Sigmoid colon (tissue), 7 donors: ENCODE measurements at regions of chr3 and their contacts with region 1.

Region 1: DNA sequence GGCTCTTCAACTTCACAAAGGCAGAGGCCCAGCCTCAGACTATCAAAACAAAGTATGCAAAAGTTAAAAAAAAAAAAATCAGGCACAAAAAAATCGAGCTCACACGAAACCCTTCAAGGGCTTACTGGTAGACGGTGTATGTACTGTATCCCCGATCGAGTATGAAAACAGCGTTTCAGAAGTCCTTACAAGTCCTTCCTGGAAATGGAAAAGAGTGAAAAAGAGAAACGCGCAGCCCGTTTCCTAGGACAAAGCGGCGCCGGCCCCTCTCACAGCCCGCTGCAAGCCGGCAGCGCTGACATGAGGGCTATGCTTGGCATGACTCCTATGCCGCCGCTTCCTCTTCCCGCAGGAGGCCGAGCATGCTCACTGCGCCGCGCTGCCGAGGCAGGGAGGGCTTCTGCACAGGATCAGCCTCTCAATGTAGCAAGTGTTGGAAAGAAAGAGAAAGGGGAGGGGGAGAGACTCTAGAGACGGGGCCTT is at the start of gene VGLL4:
- DNase-seq: peak; percentile 95
- H3K4me3 ChIP-seq: peak within 1 kb of the TSS; percentile 55 to 78 (median 64)
- H3K27ac ChIP-seq: peak within 1 kb of the TSS; percentile 87 to 97 (median 92)
- H3K4me1 ChIP-seq: peaks cover 0 to 37% (median 30%) of the 10 kb centered on the region in 4 donors
- H3K27me3 ChIP-seq: no peaks in the 10 kb centered on the region
- CTCF ChIP-seq: no peak
- EP300 ChIP-seq: no peak
- POLR2A ChIP-seq: peak; percentile 47 to 48
- total RNA-seq, gene VGLL4: 26.4 to 56.5 (median 50.5) TPM

Region 2: GRCh38 chr3:11385891-11386290 is 257.8 kb before region 1 on chr3:
- intact Hi-C with region 1: loop called (anchors 2 kb)
- DNase-seq: no peak
- H3K4me3 ChIP-seq: no peak overlapping the region
- H3K27ac ChIP-seq: peak overlapping the region in 2 of 4 donors; percentile 68 to 72
- H3K4me1 ChIP-seq: peaks cover 0 to 41% (median 26%) of the 10 kb centered on the region in 4 donors
- H3K27me3 ChIP-seq: no peaks in the 10 kb centered on the region
- CTCF ChIP-seq: no peak
- EP300 ChIP-seq: no peak
- POLR2A ChIP-seq: no peak

Region 3: GRCh38 chr3:11465744-11466616 is 177.7 kb before region 1 on chr3:
- intact Hi-C with region 1: loop called (anchors 2 kb)
- DNase-seq: peak; percentile 89
- H3K4me3 ChIP-seq: no peak overlapping the region
- H3K27ac ChIP-seq: peak overlapping the region; percentile 79 to 96 (median 86)
- H3K4me1 ChIP-seq: peaks cover 0 to 43% (median 40%) of the 10 kb centered on the region in 4 donors
- H3K27me3 ChIP-seq: no peaks in the 10 kb centered on the region
- CTCF ChIP-seq: no peak
- EP300 ChIP-seq: peak; percentile 81 to 99 (median 94)
- POLR2A ChIP-seq: no peak

Region 4: DNA sequence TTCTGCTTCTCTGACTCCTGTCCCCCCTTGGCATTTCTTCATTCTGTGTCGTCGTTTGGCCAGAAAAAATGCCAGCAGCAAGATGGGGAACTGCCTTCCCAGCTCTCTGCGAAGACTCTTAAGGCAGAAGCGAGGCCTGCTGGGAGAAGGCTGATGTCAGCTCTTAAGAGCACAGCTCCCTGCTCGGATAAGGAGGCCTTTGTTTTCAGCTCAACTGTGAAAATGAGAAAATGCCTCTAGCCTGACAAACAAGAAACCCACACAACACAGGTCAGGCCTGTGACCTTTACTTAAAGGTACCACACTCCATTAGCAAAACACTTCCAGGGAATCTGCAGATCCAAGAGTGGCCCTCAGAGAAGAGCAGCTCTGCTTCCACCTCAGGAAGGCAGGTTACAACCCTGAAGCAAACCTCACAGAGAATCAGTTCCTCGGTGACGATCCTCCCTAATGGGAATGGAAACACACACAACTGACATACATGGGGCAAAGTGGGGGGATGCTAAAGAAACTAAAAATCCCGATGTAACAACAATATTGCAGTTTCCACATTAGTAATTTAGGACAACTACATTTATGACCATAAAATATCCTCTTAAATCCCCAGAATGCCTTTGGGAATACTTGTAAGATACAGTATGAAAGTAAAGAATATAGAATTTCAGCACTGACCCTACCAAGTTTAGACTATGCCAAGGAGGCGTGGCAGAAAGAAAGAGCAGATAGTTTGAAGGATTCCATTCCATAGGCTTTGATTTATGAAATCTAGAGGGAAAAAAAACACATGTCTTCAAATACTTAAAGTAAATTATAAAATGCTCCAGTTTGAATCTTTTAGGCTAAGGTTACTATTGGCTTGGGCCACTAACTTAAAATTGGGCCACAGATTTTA is 52.0 kb before region 1 on chr3:
- intact Hi-C with region 1: loop called (anchors 2 kb)
- DNase-seq: peak; percentile 85
- H3K4me3 ChIP-seq: peak overlapping the region in 1 of 4 donors; percentile 2
- H3K27ac ChIP-seq: peak overlapping the region; percentile 69 to 84 (median 78)
- H3K4me1 ChIP-seq: peaks cover 0 to 85% (median 77%) of the 10 kb centered on the region in 4 donors
- H3K27me3 ChIP-seq: no peaks in the 10 kb centered on the region
- CTCF ChIP-seq: no peak
- EP300 ChIP-seq: peak in 1 of 4 donors; percentile 29
- POLR2A ChIP-seq: no peak

Region 5: GRCh38 chr3:11601446-11602238 is 42.0 kb before region 1 on chr3:
- intact Hi-C with region 1: loop called (anchors 1 kb)
- DNase-seq: peak; percentile 85
- H3K4me3 ChIP-seq: no peak overlapping the region
- H3K27ac ChIP-seq: peak overlapping the region; percentile 85 to 94 (median 89)
- H3K4me1 ChIP-seq: peaks cover 3 to 92% (median 81%) of the 10 kb centered on the region in 4 donors
- H3K27me3 ChIP-seq: no peaks in the 10 kb centered on the region
- CTCF ChIP-seq: no peak
- EP300 ChIP-seq: no peak
- POLR2A ChIP-seq: no peak

Region 6: DNA sequence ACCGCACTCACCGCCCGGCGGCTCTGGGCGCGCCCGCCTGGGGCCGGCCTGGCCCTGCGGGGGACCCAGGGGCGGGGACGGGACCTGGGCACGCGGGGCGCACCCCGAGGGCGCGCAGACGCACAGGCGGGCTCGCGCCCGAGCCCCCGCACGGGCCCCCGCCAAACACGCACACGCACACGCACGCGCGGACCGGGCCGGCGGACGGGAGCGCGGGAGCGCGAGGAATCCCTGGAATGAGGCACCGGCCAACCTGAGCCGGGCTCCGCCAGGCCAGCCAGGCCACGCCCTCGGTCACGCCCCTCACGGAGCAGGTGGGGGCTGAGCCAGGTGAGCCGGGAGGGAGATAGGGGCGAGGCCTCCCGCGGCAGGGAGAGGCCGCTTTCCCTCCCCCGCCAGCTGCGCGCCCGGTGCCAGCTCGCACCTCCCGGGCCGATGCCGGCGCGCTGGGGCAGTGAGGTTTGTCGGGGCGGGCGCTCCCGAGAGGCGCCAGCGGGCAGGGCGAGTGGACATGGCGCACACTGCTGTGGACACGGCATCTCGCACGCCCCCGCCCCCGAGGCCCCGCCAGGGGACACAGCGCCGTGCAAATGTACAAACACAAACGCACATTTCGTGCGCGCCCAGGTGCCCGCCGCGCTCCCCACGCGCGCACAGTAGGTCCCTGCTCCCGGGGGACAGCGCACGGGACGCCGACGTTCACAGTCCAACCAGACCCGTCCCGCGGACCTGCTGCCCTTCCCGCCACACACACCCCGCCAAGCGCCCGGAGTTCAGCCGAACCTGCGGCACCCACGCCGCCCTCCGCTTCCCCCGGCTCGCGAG is 76.0 kb after region 1 on chr3:
- intact Hi-C with region 1: loop called (anchors 2 kb)
- DNase-seq: peak; percentile 85
- H3K4me3 ChIP-seq: peak overlapping the region; percentile 74 to 92 (median 80)
- H3K27ac ChIP-seq: peak overlapping the region; percentile 91 to 94 (median 94)
- H3K4me1 ChIP-seq: peaks cover 0 to 26% (median 22%) of the 10 kb centered on the region in 4 donors
- H3K27me3 ChIP-seq: no peaks in the 10 kb centered on the region
- CTCF ChIP-seq: no peak
- EP300 ChIP-seq: no peak
- POLR2A ChIP-seq: no peak

Region 7: GRCh38 chr3:12681943-12682390 is 1038.3 kb after region 1 on chr3:
- intact Hi-C with region 1: no loop called
- DNase-seq: no peak
- H3K4me3 ChIP-seq: no peak overlapping the region
- H3K27ac ChIP-seq: peak overlapping the region in 3 of 4 donors; percentile 19 to 38 (median 25)
- H3K4me1 ChIP-seq: no peaks in the 10 kb centered on the region
- H3K27me3 ChIP-seq: no peaks in the 10 kb centered on the region
- CTCF ChIP-seq: no peak
- EP300 ChIP-seq: no peak
- POLR2A ChIP-seq: no peak